Activated naive CD4-positive, alpha-beta T cell treated with anti-CD3 and anti-CD28 coated beads for 36 hours (primary cell): ENCODE measurements at regions of chr13 and their contacts with region 1.

Region 1: GRCh38 chr13:73835138-73835721 is 299.0 kb downstream of the KLF12 start:
- DNase-seq: no peak
- H3K4me3 Mint-ChIP-seq: no peak overlapping the region
- H3K27ac Mint-ChIP-seq: no peak overlapping the region
- H3K4me1 Mint-ChIP-seq: peaks cover 47% of the 10 kb centered on the region
- H3K27me3 Mint-ChIP-seq: no peaks in the 10 kb centered on the region

Region 2: DNA sequence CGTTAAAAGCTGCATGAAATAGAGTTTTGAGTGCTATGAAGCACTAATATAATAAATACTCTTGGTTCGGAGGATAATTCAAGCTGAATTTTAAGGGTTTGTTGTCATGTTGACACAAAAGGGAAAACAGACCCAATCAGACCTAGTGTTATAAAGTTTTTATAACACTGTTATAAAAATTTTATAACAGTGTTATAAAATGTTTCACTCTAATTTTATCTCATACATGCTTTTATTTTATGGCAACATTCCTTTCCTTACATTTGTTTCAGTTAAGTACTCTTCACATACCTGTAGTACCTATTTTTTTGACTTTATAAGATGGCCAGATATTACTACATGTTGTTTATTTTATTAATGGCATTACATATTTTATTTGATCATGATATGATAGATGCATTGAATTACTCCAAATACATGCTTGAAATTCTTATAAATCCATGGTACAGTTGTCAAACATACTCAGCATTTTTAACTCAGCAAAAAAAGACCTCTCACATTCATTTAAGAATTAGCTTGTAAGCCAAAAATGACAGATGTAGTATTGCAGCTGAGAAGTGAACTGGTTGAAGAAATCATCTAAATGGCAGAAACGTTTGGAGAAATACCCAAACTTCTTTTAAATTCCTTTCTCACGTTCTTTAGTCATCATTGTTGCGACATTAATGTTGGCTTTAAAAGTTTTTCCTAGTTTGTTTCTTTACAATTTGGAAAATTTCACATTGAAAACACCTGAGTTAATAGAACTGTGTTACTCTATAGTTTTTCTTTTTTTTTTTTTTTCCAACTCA is 948.8 kb before region 1 on chr13:
- CTCF ChIA-PET with region 1: no interaction called
- intact Hi-C with region 1: no loop called
- DNase-seq: no peak
- H3K4me3 Mint-ChIP-seq: no peak overlapping the region
- H3K27ac Mint-ChIP-seq: no peak overlapping the region
- H3K4me1 Mint-ChIP-seq: peaks cover 8% of the 10 kb centered on the region
- H3K27me3 Mint-ChIP-seq: no peaks in the 10 kb centered on the region

Region 3: DNA sequence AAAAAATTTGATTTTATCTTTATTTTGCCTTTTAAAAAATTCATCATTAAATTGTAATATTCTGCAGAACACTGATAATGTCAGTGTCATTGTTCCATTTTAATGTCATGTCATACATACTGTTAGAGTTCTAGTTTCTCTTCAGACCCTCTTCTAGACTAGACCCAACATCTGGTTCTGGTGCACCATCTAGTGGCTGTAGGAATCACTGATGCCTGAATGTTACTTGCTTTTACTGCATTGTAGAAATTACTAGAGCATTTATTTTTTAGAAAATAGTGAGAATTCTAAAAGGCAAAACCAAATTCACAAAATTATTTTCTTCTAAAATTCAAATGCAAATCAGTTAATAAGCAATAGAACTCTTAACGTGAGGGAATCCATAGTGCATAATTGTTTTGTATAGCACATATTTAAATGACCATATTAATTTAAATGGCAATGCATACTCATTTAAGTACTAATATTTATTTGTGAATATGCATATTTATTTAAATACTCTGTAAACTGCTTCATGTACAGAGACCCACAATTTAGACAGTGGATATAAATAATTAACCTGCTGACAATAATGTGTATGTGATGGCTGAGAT is 126.7 kb before region 1 on chr13:
- CTCF ChIA-PET with region 1: no interaction called
- intact Hi-C with region 1: no loop called
- DNase-seq: peak; percentile 73
- H3K4me3 Mint-ChIP-seq: no peak overlapping the region
- H3K27ac Mint-ChIP-seq: no peak overlapping the region
- H3K4me1 Mint-ChIP-seq: peaks cover 15% of the 10 kb centered on the region
- H3K27me3 Mint-ChIP-seq: no peaks in the 10 kb centered on the region

Region 4: GRCh38 chr13:73765651-73766384 is 69.4 kb before region 1 on chr13:
- CTCF ChIA-PET with region 1: interaction called, 4 read pairs
- intact Hi-C with region 1: loop called (anchors 2 kb)
- DNase-seq: peak; percentile 95
- H3K4me3 Mint-ChIP-seq: peak overlapping the region; percentile 70
- H3K27ac Mint-ChIP-seq: peak overlapping the region; percentile 92
- H3K4me1 Mint-ChIP-seq: peaks cover 64% of the 10 kb centered on the region
- H3K27me3 Mint-ChIP-seq: no peaks in the 10 kb centered on the region

Region 5: DNA sequence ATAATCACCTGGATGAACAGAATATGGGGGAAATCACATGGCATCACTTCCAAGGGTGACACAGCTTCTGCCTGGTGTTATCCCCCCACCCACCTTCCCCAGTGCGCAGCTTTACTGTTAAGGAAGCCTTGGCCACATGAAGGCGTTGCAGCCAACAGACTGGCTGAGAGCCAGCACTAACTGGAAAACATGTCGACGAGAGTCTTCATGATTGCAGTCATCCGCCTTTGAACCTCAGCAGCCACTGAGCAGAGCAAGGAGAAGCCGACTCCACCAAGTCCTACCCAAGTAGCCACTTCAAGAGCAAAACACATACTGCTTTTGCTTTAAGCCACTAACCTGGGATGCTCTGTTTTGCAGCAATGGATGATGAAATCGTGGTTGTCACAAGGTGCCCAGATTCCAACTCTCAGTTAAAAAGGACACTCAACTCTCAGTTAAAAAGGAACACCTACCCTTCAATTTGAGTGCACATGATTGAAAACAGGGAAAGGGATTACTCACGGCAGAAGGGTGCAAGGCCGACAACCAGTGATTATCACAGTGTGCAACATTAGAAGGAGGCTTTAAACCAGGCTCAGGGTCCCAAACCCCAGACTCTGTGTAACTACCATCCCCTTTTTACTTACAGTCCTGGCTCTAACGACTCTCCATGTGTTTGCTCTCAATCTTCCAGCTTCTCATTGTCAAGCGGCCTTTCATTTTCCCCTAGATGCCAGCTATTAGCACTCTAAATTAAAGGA is 149.9 kb after region 1 on chr13:
- CTCF ChIA-PET with region 1: no interaction called
- intact Hi-C with region 1: loop called (anchors 1 kb)
- DNase-seq: peak; percentile 95
- H3K4me3 Mint-ChIP-seq: peak overlapping the region; percentile 73
- H3K27ac Mint-ChIP-seq: peak overlapping the region; percentile 96
- H3K4me1 Mint-ChIP-seq: peaks cover 39% of the 10 kb centered on the region
- H3K27me3 Mint-ChIP-seq: no peaks in the 10 kb centered on the region

Region 6: DNA sequence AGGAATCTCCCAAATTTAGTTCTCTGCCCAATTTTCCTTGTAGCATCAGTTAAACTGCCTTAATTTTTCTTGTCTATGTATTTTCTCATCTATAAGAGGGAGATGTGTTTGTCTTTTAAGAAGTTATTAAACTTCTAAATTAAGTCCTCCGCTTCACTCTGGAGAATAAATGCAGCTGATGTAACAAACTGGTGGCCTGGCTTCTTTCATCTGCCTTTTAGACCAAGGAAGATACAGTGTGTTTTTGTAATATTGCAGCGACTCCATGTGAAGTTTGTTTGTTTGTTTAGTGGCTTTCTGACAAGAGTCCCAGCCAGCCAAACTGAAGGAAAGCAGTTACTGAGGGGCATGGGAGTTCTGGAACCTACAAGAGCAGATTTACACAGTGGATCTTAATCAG is 242.6 kb after region 1 on chr13:
- CTCF ChIA-PET with region 1: no interaction called
- intact Hi-C with region 1: no loop called
- DNase-seq: no peak
- H3K4me3 Mint-ChIP-seq: no peak overlapping the region
- H3K27ac Mint-ChIP-seq: no peak overlapping the region
- H3K4me1 Mint-ChIP-seq: peaks cover 65% of the 10 kb centered on the region
- H3K27me3 Mint-ChIP-seq: no peaks in the 10 kb centered on the region

Region 7: GRCh38 chr13:74115138-74115537 is 279.9 kb after region 1 on chr13:
- CTCF ChIA-PET with region 1: interaction called, 3 read pairs
- intact Hi-C with region 1: loop called (anchors 2 kb)
- DNase-seq: no peak
- H3K4me3 Mint-ChIP-seq: no peak overlapping the region
- H3K27ac Mint-ChIP-seq: peak overlapping the region; percentile 41
- H3K4me1 Mint-ChIP-seq: peaks cover 75% of the 10 kb centered on the region
- H3K27me3 Mint-ChIP-seq: no peaks in the 10 kb centered on the region

Region 8: GRCh38 chr13:74575729-74576125 is 740.5 kb after region 1 on chr13:
- CTCF ChIA-PET with region 1: no interaction called
- intact Hi-C with region 1: loop called (anchors 10 kb)
- DNase-seq: peak; percentile 77
- H3K4me3 Mint-ChIP-seq: peak overlapping the region; percentile 69
- H3K27ac Mint-ChIP-seq: no peak overlapping the region
- H3K4me1 Mint-ChIP-seq: peaks cover 10% of the 10 kb centered on the region
- H3K27me3 Mint-ChIP-seq: peaks cover 20% of the 10 kb centered on the region